Activated CD4-positive, alpha-beta memory T cell treated with anti-CD3 and anti-CD28 coated beads for 36 hours (primary cell): ENCODE measurements at regions of chr12 and their contacts with region 1.

Region 1: DNA sequence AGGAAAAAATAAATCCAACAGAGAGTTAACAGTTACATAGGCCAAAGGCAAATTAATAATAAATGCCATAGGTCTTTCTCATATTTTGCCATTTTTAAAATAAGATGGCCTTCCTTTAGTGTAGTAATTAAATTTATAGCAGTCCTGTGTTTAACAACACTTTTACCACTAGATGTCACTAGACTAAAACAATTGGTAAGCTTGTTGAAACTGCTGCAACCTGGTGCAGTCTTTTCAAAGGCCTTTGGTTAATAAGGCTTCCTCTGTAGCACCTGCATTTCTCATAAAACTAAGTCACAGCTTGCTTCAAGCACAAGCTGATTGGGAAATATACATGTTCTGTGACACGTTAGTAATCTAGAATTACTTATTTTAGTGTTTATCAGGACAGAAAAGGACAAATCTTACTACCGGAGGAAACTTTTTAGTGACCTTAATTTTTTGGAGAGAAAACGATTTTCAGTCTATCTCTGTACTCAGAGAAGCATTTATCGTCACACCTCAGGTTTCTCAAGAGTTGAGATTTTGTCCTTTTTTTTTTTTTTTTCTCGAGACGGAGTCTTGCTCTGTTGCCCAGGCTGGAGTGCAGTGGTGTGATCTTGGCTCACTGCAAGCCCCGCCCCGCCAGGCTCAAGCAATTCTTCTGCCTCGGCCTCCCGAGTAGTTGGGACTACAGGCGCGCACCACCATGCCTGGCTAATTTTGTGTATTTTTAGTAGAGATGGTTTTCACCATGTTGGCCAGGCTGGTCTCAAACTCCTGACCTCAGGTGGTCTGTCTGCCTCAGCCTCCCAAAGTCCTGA is 20.0 kb downstream of the BORCS5 start:
- DNase-seq: no peak
- H3K4me3 Mint-ChIP-seq: no peak overlapping the region
- H3K27ac Mint-ChIP-seq: peak overlapping the region; percentile 70
- H3K4me1 Mint-ChIP-seq: peaks cover 45% of the 10 kb centered on the region
- H3K27me3 Mint-ChIP-seq: no peaks in the 10 kb centered on the region

Region 2: GRCh38 chr12:12091977-12092663 is 284.7 kb before region 1 on chr12:
- CTCF ChIA-PET with region 1: no interaction called
- POLR2A ChIA-PET with region 1: no interaction called
- intact Hi-C with region 1: no loop called
- DNase-seq: no peak
- H3K4me3 Mint-ChIP-seq: no peak overlapping the region
- H3K27ac Mint-ChIP-seq: no peak overlapping the region
- H3K4me1 Mint-ChIP-seq: no peaks in the 10 kb centered on the region
- H3K27me3 Mint-ChIP-seq: peaks cover 1% of the 10 kb centered on the region

Region 3: GRCh38 chr12:12327802-12328201 is 49.0 kb before region 1 on chr12:
- CTCF ChIA-PET with region 1: no interaction called
- POLR2A ChIA-PET with region 1: no interaction called
- intact Hi-C with region 1: no loop called
- DNase-seq: no peak
- H3K4me3 Mint-ChIP-seq: no peak overlapping the region
- H3K27ac Mint-ChIP-seq: no peak overlapping the region
- H3K4me1 Mint-ChIP-seq: peaks cover 15% of the 10 kb centered on the region
- H3K27me3 Mint-ChIP-seq: no peaks in the 10 kb centered on the region

Region 4: GRCh38 chr12:12442548-12443071 is 65.8 kb after region 1 on chr12:
- CTCF ChIA-PET with region 1: interaction called, 4 read pairs
- POLR2A ChIA-PET with region 1: interaction called, 6 read pairs
- intact Hi-C with region 1: loop called (anchors 1 kb)
- DNase-seq: no peak
- H3K4me3 Mint-ChIP-seq: peak overlapping the region; percentile 30
- H3K27ac Mint-ChIP-seq: peak overlapping the region; percentile 91
- H3K4me1 Mint-ChIP-seq: peaks cover 88% of the 10 kb centered on the region
- H3K27me3 Mint-ChIP-seq: no peaks in the 10 kb centered on the region

Region 5: GRCh38 chr12:12474931-12475795 is 98.3 kb after region 1 on chr12:
- CTCF ChIA-PET with region 1: interaction called, 51 read pairs
- POLR2A ChIA-PET with region 1: interaction called, 12 read pairs
- intact Hi-C with region 1: loop called (anchors 1 kb)
- DNase-seq: peak; percentile 86
- H3K4me3 Mint-ChIP-seq: peak overlapping the region; percentile 63
- H3K27ac Mint-ChIP-seq: peak overlapping the region; percentile 99
- H3K4me1 Mint-ChIP-seq: peaks cover 82% of the 10 kb centered on the region
- H3K27me3 Mint-ChIP-seq: no peaks in the 10 kb centered on the region

Region 6: GRCh38 chr12:12611512-12612306 is 234.9 kb after region 1 on chr12 and contains the start of gene CREBL2:
- CTCF ChIA-PET with region 1: interaction called, 3 read pairs
- POLR2A ChIA-PET with region 1: interaction called, 4 read pairs
- intact Hi-C with region 1: loop called (anchors 1 kb)
- DNase-seq: peak; percentile 92
- H3K4me3 Mint-ChIP-seq: peak within 1 kb of the TSS; percentile 82
- H3K27ac Mint-ChIP-seq: peak within 1 kb of the TSS; percentile 95
- H3K4me1 Mint-ChIP-seq: peaks cover 54% of the 10 kb centered on the region
- H3K27me3 Mint-ChIP-seq: no peaks in the 10 kb centered on the region
- total RNA-seq, gene CREBL2: 30.4 to 32.2 TPM

Region 7: DNA sequence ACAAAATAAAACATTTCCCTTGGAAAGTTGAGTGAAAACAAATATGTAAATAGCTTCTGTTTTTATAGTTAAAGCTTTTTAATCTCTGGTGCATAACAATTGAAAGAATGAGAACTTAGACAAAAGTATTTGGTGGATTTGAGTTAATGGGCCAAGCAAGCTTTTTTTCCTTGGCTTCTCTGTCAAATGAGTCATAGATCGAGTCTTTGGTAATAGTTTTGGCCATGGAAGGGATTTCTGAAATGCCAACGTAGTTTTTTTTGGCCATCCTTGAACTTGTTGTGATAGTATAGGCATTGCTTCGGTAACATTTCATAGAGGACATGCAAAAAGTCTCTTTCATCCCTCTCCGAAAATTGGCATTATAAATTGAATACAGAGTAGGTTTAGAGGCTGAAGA is 284.2 kb after region 1 on chr12:
- CTCF ChIA-PET with region 1: interaction called, 28 read pairs
- POLR2A ChIA-PET with region 1: no interaction called
- intact Hi-C with region 1: loop called (anchors 1 kb)
- DNase-seq: no peak
- H3K4me3 Mint-ChIP-seq: no peak overlapping the region
- H3K27ac Mint-ChIP-seq: no peak overlapping the region
- H3K4me1 Mint-ChIP-seq: peaks cover under 1% of the 10 kb centered on the region
- H3K27me3 Mint-ChIP-seq: no peaks in the 10 kb centered on the region

Region 8: GRCh38 chr12:12724661-12725545 is 348.1 kb after region 1 on chr12:
- CTCF ChIA-PET with region 1: no interaction called
- POLR2A ChIA-PET with region 1: interaction called, 3 read pairs
- intact Hi-C with region 1: loop called (anchors 1 kb)
- DNase-seq: peak; percentile 95
- H3K4me3 Mint-ChIP-seq: peak overlapping the region; percentile 95
- H3K27ac Mint-ChIP-seq: peak overlapping the region; percentile 97
- H3K4me1 Mint-ChIP-seq: peaks cover 50% of the 10 kb centered on the region
- H3K27me3 Mint-ChIP-seq: peaks cover 2% of the 10 kb centered on the region

Region 9: DNA sequence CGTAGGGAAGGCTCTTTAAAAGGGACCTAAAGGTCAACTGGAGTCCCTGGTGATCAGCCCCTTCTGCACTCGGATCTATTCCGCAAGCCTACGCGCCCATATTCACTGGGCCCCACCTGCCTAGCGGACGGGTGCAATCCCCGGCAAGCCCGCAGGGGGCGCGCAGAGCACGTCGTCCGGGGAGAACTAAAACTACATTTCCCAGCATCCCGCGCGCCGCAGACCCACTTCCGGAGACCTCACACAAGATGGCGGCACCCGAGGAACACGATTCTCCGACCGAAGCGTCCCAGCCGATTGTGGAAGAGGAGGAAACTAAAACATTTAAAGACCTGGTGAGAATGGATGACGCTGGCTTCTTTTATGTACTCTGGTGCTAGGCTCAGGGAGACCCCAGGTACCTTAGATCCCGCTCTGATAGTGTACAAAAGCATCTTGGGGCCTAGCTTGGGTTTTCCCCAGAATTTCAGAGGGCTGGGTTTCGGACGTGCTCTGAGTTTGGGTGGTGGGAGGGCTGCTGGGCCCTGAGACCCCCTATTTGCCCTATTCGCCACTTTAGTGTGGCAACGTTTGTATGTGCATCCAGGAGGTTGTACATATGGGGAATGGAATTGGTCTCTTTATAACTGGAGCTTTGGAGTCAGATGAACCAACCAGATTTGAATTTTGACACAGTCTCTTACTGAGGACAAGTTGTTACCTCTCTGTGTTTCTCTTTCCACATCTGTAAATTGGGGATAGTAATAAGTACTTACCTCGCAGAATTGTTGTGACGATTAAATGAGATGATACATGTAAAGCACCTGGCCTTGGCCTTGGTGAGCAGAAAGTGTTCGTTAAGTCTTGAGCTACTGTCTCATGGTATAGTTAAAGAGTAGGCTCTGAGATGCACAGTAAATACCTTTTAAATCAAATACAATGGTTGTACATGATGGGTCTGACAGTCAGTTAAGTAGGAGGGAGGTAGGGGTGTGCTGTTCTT is 436.6 kb after region 1 on chr12 and contains the start of gene DDX47:
- CTCF ChIA-PET with region 1: no interaction called
- POLR2A ChIA-PET with region 1: no interaction called
- intact Hi-C with region 1: no loop called
- DNase-seq: peak; percentile 98
- H3K4me3 Mint-ChIP-seq: peak within 1 kb of the TSS; percentile 93
- H3K27ac Mint-ChIP-seq: peak within 1 kb of the TSS; percentile 95
- H3K4me1 Mint-ChIP-seq: peaks cover 59% of the 10 kb centered on the region
- H3K27me3 Mint-ChIP-seq: no peaks in the 10 kb centered on the region
- total RNA-seq, gene DDX47: 75.2 to 75.3 TPM